ENCODE measurements at regions of chr5 and their contacts with region 1.

Region 1: DNA sequence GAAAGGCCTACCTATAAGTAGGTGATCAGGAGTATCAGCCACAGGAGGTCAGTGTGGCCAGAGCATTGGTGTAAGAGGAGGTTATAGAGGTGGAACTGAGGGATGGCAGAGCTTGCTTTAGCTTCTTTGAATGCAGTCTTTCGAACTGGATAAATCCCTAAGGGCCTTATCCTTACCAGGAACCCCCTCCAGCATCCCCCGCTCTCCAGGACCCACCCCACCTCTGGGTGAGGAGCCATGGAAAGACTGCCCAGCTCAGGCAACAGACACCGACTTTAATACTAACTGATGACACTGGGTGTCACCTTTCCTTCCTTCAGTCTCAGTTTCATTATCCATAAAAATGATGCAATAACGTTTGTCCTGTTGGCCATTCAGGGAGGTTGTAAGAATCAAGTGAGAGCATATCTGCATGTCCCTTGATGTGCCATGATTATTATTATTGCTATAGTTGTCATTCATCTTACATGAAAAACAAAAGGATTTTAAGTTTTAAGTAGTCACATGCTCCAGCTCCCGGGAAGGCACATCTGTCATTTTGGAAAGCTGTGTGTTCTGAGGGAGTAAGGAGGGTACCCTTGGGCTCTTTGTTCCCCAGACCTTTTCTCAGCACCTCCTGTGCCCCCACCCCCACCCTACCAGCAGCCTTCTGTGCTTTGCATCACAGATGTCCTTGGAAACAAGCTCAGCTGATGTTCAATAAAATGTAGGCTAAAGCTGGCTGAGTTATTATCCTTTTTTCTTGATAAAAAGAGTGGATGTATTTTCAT is 50.7 kb upstream of the CTNNA1 start:
- DNase-seq: no peak
- H3K4me3 ChIP-seq: no peak overlapping the region
- CTCF ChIP-seq: no peak

Region 2: GRCh38 chr5:138649316-138649720 is 53.2 kb before region 1 on chr5:
- in situ Hi-C with region 1: loop called (anchors 5 kb)
- DNase-seq: no peak
- H3K4me3 ChIP-seq: no peak overlapping the region
- CTCF ChIP-seq: no peak